Mammary epithelial cell (primary cell): ENCODE measurements at regions of chr1 and their contacts with region 1.

Region 1: DNA sequence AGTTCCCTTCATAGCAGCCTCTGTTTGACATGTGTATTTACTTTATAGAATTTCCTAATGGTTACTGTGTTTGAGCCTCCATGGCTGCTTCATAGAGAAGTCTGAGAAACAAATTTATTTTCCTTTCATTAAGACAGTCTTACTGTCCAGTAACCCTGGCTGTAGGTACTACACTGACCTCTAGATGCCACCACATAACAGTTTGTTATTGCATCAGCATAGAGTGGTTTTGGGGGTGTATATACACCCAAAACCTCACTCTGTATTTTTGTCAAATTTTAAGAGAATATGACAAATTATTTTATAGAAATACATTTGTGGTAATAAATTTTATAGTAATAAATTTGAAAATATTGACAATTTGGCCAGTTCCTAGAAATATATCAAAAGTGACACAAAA is 57.3 kb downstream of the OBSCN start:
- DNase-seq: no peak
- H3K4me3 ChIP-seq: no peak overlapping the region
- H3K27ac ChIP-seq: no peak overlapping the region
- H3K4me1 ChIP-seq: no peaks in the 10 kb centered on the region
- H3K27me3 ChIP-seq: no peaks in the 10 kb centered on the region
- CTCF ChIP-seq: peak in 1 of 2 donors; percentile 43

Region 2: GRCh38 chr1:228393248-228393699 is 128.1 kb after region 1 on chr1:
- CTCF ChIA-PET with region 1: no interaction called
- dilution Hi-C with region 1: no loop called
- in situ Hi-C with region 1: no loop called
- intact Hi-C with region 1: loop called (anchors 1 kb)
- DNase-seq: no peak
- H3K4me3 ChIP-seq: no peak overlapping the region
- H3K27ac ChIP-seq: no peak overlapping the region
- H3K4me1 ChIP-seq: no peaks in the 10 kb centered on the region
- H3K27me3 ChIP-seq: no peaks in the 10 kb centered on the region
- CTCF ChIP-seq: peak; percentile 39 to 72

Region 3: DNA sequence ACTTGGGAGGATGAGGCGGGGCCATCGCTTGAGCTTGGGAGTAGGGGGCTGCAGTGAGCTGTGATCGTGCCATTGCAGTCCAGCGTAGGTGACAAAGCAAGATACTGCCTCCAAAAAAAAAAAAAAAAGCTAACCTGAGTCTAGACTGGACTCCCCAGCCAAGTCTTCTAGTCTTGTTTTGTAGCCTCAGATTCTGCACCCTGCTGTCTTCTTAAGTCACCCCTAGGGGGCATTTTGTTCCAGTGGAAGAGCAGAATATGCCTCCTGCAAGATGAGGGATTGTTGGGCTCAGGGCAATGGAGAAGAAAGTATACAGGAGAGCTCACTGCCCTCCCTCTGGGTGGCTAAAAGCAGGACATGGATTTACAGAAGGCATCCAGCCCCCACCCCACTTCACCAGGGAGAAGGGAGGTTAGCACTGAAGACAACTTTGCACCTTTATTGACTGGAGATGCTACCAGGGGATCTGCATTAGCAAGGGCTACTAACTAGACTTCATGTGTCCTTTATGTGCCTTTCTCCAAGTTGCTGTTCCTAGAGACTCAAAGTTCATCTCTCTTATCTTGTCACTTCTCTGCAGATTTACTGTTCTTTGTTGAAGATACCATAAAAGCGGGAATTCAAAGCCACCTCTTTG is 206.7 kb after region 1 on chr1:
- CTCF ChIA-PET with region 1: no interaction called
- dilution Hi-C with region 1: no loop called
- in situ Hi-C with region 1: no loop called
- intact Hi-C with region 1: no loop called
- DNase-seq: peak; percentile 24
- H3K4me3 ChIP-seq: no peak overlapping the region
- H3K27ac ChIP-seq: no peak overlapping the region
- H3K4me1 ChIP-seq: peaks cover 6% of the 10 kb centered on the region
- H3K27me3 ChIP-seq: peaks cover 13% of the 10 kb centered on the region
- CTCF ChIP-seq: peak; percentile 57 to 71

Region 4: GRCh38 chr1:228515200-228515834 is 250.2 kb after region 1 on chr1:
- CTCF ChIA-PET with region 1: no interaction called
- dilution Hi-C with region 1: no loop called
- in situ Hi-C with region 1: no loop called
- intact Hi-C with region 1: loop called (anchors 5 kb)
- DNase-seq: no peak
- H3K4me3 ChIP-seq: no peak overlapping the region
- H3K27ac ChIP-seq: no peak overlapping the region
- H3K4me1 ChIP-seq: no peaks in the 10 kb centered on the region
- H3K27me3 ChIP-seq: peaks cover 4% of the 10 kb centered on the region
- CTCF ChIP-seq: peak; percentile 54 to 67